ENCODE measurements at regions of chr17 and their contacts with region 1.

Region 1: DNA sequence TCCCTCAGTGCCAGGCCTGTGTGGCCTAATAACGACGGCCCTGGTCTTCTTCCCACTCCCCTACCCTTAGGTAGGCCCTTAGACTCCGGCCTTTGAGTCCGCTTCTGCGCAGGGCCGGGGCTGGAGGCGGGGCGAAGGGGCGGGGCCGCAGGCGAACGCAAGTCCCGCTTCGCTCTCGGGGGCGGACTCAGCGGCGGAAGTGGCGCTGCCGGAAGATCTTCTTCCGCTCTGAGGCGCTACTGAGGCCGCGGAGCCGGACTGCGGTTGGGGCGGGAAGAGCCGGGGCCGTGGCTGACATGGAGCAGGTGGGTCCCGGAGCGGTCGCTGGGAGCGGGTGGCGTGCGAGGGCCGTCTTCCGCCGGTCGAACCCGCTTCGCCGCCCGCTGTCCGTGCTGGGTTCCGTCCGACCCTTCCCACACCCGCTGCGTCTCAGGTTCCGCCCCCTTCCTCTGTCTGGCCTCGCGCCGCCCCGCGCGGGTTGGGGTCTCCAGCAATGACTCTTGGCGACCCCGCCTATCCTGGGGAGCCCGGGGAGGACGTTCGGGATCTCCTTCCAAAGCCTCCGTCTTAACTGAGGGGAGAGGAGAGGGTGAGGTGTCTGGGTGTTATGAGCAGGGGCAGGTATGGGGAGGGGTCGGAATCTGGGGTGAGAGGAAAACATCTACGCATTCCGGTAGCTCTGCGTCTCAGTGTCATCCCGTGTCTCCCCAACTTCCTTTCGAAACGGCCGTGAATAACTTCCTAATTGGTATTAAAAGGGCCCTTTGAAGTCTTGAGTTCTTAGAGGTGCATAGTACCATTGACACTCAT is at the start of gene STARD3:
- DNase-seq: peak; percentile 79
- H3K4me3 ChIP-seq: peak within 1 kb of the TSS; percentile 65 to 91 (median 76)
- H3K27ac ChIP-seq: peak within 1 kb of the TSS; percentile 55
- H3K4me1 ChIP-seq: peaks cover 16% of the 10 kb centered on the region
- H3K27me3 ChIP-seq: no peaks in the 10 kb centered on the region
- CTCF ChIP-seq: peak in 1 of 2 donors; percentile 37
- total RNA-seq, gene STARD3: 20.2 to 35.7 TPM

Region 2: GRCh38 chr17:39538866-39539265 is 98.3 kb before region 1 on chr17:
- CTCF ChIA-PET with region 1: no interaction called
- dilution Hi-C with region 1: loop called (anchors 5 kb)
- in situ Hi-C with region 1: no loop called
- intact Hi-C with region 1: no loop called
- DNase-seq: no peak
- H3K4me3 ChIP-seq: no peak overlapping the region
- H3K27ac ChIP-seq: no peak overlapping the region
- H3K4me1 ChIP-seq: peaks cover 4% of the 10 kb centered on the region
- H3K27me3 ChIP-seq: no peaks in the 10 kb centered on the region
- CTCF ChIP-seq: no peak

Region 3: DNA sequence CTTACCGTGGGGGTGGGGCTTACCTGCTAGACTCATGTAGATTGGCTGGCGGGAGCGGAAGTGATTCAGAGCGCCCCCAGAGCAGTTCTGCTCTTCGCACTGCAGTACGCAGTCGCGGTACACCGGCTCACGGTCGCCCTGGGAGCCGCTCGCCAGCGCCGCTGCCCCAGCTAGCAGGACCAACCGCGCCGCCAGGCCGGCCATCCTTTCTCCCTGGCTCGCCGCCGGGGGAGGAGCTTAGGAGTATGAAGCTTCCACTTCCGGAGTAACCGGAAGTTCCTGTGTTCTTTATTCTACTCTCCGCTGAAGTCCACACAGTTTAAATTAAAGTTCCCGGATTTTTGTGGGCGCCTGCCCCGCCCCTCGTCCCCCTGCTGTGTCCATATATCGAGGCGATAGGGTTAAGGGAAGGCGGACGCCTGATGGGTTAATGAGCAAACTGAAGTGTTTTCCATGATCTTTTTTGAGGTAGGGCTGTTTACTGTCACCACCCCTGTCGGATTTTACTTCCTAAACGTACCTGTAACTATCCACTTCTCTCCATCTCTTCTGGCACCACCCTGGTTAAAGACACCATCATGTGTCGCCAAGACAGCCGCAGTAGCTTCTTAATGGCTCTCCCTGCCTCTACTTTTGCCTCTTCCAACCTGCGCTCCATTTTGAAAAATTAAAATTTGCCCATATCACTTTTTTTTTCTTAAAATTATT is 50.8 kb after region 1 on chr17 and contains the start of gene PGAP3:
- CTCF ChIA-PET with region 1: no interaction called
- dilution Hi-C with region 1: no loop called
- in situ Hi-C with region 1: no loop called
- intact Hi-C with region 1: loop called (anchors 5 kb)
- DNase-seq: peak; percentile 90
- H3K4me3 ChIP-seq: peak within 1 kb of the TSS; percentile 50 to 76 (median 66)
- H3K27ac ChIP-seq: peak within 1 kb of the TSS; percentile 41
- H3K4me1 ChIP-seq: peaks cover 10% of the 10 kb centered on the region
- H3K27me3 ChIP-seq: no peaks in the 10 kb centered on the region
- CTCF ChIP-seq: no peak
- total RNA-seq, gene PGAP3: 8.3 to 13.2 TPM

Region 4: DNA sequence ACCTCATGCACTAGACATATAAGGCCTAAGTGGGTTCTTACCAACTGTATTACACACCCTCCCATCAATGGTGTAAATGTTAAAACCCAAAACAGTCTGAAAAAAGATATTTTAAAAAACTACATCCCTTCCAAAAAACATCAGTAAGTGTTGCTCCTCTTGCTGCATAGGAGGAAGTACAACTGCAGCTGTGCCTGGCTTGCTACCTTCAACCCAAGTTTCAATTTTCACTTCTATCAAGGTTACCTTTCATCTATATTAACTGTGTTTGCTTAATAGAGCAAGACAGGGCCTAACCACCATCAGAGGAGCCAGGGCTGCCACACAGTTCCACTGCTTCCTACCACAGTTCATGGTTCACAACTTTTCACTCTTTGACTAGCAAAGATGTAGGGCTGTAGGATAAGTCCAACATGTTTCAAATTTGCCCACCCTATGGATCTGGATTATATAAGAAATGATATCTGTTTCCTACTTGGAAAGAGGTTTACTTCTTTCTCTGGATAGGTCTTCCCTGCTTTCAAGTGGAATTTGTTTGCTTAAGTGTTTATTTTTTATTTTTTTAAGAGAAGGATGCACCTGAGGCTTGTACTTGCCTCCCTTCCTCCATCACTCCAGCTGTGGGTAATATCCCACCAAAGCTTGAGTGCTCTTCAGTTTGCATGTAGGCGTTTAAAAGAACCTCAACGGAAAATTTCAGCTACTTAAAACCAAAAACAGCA is 157.3 kb after region 1 on chr17:
- CTCF ChIA-PET with region 1: no interaction called
- dilution Hi-C with region 1: loop called (anchors 5 kb)
- in situ Hi-C with region 1: no loop called
- intact Hi-C with region 1: no loop called
- DNase-seq: no peak
- H3K4me3 ChIP-seq: no peak overlapping the region
- H3K27ac ChIP-seq: no peak overlapping the region
- H3K4me1 ChIP-seq: no peaks in the 10 kb centered on the region
- H3K27me3 ChIP-seq: peaks cover 17% of the 10 kb centered on the region
- CTCF ChIP-seq: no peak

Region 5: GRCh38 chr17:39952680-39953470 is 315.7 kb after region 1 on chr17:
- CTCF ChIA-PET with region 1: no interaction called
- dilution Hi-C with region 1: loop called (anchors 10 kb)
- in situ Hi-C with region 1: no loop called
- intact Hi-C with region 1: no loop called
- DNase-seq: peak; percentile 85
- H3K4me3 ChIP-seq: peak overlapping the region; percentile 8 to 55 (median 21)
- H3K27ac ChIP-seq: no peak overlapping the region
- H3K4me1 ChIP-seq: peaks cover 8% of the 10 kb centered on the region
- H3K27me3 ChIP-seq: no peaks in the 10 kb centered on the region
- CTCF ChIP-seq: no peak

Measured in mammary epithelial cell (primary cell).